Left cardiac atrium (tissue), 4 donors: ENCODE measurements at regions of chr11 and their contacts with region 1.

Region 1: GRCh38 chr11:46006418-46007070 is 84.1 kb downstream of the LARGE2 start:
- DNase-seq: no peak
- ATAC-seq: peak; percentile 83

Region 2: DNA sequence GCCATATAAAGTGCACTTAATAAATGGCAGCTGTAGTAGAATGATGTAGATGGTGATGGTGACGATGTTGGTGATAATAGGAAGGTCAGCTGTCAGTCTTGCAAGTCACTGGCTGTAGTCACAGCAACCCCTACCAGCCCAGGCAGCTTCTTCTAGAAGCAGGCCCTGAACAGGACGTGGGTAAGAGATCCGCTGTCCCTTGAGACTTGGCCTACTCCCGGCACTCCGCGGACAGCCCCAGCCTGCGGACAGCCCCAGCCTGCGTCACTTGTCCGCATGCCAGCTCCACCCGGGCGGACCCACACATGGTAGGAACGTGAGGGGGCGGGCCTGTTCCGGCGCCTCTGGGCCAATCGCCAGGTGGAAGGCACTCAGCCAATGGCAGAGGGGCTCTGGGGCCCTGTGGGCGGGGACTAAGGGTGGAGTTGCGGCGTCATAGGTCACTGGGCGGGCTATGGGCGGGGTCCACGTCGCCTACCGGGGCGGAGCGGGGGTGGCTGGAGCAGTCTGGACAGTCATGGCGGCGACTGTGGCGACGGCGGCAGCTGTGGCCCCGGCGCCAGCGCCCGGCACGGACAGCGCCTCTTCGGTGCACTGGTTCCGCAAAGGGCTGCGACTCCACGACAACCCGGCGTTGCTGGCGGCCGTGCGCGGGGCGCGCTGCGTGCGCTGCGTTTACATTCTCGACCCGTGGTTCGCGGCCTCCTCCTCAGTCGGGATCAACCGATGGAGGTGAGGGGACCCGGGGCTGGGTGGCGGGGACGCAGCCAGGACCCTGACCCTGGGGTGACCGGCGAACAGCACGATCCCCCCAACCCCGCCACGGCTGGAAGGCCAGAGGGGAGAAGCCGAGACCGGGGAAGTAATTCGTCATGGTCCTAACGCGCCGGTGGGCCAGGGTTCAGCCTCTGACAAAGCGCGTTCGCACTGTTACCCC is 159.3 kb before region 1 on chr11 and contains the start of gene CRY2:
- intact Hi-C with region 1: loop called in 1 of 2 experiments (anchors 10 kb)
- DNase-seq: peak; percentile 99
- ATAC-seq: peak; percentile 96 to 99
- total RNA-seq, gene CRY2: 59.2 to 62.9 TPM

Region 3: DNA sequence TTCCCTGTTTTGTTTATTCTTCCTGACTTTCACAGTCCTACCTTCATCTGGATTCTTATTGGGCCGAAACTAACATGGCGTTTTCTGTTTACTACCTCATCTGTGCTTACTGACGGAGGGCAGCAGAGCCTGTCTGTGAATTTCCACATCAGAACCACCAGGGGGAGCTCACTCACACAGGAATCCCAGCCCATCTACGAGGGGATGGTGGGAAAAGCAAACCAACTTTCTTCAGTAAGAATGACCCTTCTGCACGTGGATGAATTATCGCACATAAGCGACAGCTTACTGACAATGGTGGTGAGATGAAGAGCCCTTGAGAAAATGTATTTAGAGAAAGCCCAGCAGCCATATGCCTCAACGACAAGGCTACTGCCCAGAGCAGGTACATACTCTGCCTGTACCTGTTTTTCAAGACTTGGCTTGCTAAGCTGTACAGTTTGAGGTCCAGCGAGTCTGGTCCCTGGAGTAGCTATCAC is 41.6 kb before region 1 on chr11:
- intact Hi-C with region 1: loop called in 1 of 2 experiments (anchors 2 kb)
- DNase-seq: peak; percentile 46
- ATAC-seq: peak; percentile 89 to 90